Sciatic nerve (tissue), 2 donors: ENCODE measurements at regions of chr17 and their contacts with region 1.

Region 1: DNA sequence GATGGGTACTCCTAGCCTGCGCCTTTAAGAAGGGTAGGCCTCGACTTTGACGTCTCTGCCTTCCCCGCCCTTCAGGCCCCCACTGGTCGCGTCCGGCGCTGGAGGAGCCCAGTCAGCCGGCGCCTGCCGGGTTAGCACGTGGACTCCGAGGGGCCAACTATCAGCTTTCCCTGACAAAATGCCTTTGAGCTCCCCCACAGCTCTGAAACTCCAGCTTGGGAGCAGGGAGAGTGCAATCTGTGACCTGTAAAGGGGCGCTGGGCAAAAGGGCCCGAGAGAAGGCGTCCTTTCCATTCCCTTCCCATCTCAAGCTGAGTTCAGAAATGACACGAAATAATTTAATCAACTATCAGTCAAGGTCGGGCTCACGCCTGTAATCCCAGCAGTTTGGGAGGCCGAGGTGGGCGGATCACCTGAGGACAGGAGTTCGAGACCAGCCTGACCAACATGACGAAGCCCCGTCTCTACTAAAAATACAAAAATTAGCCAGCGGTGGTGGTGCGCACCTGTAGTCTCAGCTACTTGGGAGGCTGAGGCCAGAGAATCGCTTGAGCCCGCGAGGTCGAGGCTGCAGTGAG is 2.3 kb upstream of the SLC25A39 start:
- DNase-seq: peak; percentile 97
- ATAC-seq: peak; percentile 93

Region 2: GRCh38 chr17:44210342-44211192 is 116.4 kb before region 1 on chr17:
- intact Hi-C with region 1: loop called (anchors 2 kb)
- DNase-seq: peak; percentile 92
- ATAC-seq: peak; percentile 86